Activated CD4-positive, alpha-beta T cell treated with anti-CD3 and anti-CD28 coated beads, Interleukin-2, amount 10 ng/mL, durations not matched to agents 24 days and 14 days (primary cell): ENCODE measurements at regions of chr10 and their contacts with region 1.

Region 1: DNA sequence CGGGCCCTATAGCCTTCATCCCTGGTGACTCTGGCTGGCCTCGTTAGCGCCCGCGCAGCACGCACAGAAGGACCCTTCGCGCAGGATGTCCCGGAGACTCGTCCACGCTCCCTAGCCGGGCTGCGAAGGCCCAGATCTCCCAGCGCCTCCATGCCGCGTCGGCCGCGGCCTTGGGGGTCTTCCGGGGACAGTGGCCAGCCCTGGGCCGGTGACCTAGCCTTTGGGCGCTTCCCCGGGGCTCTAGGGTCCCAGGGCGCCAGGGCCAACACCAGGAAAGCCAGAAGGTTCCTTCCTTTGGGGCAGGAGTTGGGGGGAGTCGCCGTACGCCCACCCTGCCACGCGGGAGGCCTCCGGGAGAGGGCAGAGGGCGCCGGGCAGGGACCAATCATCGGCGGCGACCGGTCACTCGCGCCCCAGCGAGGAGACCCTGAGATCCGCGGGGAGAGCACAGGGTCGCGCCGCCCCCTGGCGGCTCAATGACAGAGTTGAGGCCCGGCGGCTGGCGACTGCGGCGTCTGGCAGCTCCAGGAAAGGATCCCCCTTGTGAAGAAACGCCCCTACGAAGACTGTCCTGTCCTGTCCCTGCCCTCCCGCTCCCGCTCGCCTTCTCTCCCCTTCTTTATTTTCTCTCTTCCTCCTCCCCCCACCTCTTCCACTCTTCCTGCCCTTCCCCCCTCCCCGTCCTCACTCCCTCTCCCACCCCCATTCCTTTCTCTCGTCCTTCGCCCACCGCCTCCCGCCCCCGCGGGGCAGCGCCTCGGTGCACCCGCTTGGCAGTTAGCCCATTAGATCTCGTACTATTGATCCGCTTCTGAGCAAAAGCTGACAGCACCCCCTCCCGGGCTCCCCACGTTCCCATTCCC is 62.3 kb upstream of the LBX1 start:
- DNase-seq: peak; percentile 67
- H3K4me3 Mint-ChIP-seq: peak overlapping the region; percentile 79
- H3K27ac Mint-ChIP-seq: no peak overlapping the region
- H3K4me1 Mint-ChIP-seq: peaks cover 3% of the 10 kb centered on the region
- H3K27me3 Mint-ChIP-seq: peaks cover 70% of the 10 kb centered on the region

Region 2: GRCh38 chr10:101238732-101239105 is 52.8 kb before region 1 on chr10:
- intact Hi-C with region 1: loop called (anchors 5 kb)
- DNase-seq: peak; percentile 73
- H3K4me3 Mint-ChIP-seq: no peak overlapping the region
- H3K27ac Mint-ChIP-seq: no peak overlapping the region
- H3K4me1 Mint-ChIP-seq: peaks cover 6% of the 10 kb centered on the region
- H3K27me3 Mint-ChIP-seq: peaks cover 67% of the 10 kb centered on the region